ENCODE measurements at regions of chr9 and their contacts with region 1.

Region 1: DNA sequence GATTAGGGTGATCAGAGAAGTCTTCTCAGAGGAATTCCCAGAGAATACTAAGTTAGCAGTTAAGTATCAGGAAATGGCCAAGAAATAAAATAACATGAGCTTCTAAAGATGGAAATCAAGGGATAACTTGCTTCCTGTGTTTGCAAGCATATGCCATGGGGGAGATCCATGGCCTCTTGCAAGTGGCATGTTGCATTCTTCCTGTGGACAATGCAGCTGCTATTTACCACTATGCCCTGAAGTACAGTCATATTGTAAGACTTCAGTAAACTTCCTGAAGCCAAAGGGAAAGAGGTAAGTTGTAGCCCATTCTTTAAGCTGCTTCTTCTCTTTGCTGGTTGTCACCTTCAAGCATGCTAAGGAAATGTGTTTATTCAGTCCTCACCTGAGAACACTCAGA is 154.7 kb upstream of the RUSC2 start:
- DNase-seq: no peak
- ATAC-seq: no peak
- H3K4me3 ChIP-seq: no peak overlapping the region
- H3K27ac ChIP-seq: no peak overlapping the region
- H3K4me1 ChIP-seq: peaks cover under 1% of the 10 kb centered on the region
- H3K27me3 ChIP-seq: no peaks in the 10 kb centered on the region
- CTCF ChIP-seq: no peak

Region 2: GRCh38 chr9:35374436-35374835 is 39.3 kb after region 1 on chr9:
- intact Hi-C with region 1: no loop called
- DNase-seq: no peak
- ATAC-seq: peak; percentile 39 to 76 (median 62)
- H3K4me3 ChIP-seq: peak overlapping the region; percentile 11
- H3K27ac ChIP-seq: peak overlapping the region; percentile 71
- H3K4me1 ChIP-seq: peaks cover 13% of the 10 kb centered on the region
- H3K27me3 ChIP-seq: no peaks in the 10 kb centered on the region
- CTCF ChIP-seq: no peak

Region 3: GRCh38 chr9:35385042-35385441 is 49.9 kb after region 1 on chr9:
- intact Hi-C with region 1: loop called in 1 of 2 experiments (anchors 5 kb)
- DNase-seq: no peak
- ATAC-seq: peak in 2 of 4 donors; percentile 59
- H3K4me3 ChIP-seq: no peak overlapping the region
- H3K27ac ChIP-seq: no peak overlapping the region
- H3K4me1 ChIP-seq: no peaks in the 10 kb centered on the region
- H3K27me3 ChIP-seq: no peaks in the 10 kb centered on the region
- CTCF ChIP-seq: peak; percentile 28